ENCODE measurements at regions of chr13 and their contacts with region 1.

Region 1: DNA sequence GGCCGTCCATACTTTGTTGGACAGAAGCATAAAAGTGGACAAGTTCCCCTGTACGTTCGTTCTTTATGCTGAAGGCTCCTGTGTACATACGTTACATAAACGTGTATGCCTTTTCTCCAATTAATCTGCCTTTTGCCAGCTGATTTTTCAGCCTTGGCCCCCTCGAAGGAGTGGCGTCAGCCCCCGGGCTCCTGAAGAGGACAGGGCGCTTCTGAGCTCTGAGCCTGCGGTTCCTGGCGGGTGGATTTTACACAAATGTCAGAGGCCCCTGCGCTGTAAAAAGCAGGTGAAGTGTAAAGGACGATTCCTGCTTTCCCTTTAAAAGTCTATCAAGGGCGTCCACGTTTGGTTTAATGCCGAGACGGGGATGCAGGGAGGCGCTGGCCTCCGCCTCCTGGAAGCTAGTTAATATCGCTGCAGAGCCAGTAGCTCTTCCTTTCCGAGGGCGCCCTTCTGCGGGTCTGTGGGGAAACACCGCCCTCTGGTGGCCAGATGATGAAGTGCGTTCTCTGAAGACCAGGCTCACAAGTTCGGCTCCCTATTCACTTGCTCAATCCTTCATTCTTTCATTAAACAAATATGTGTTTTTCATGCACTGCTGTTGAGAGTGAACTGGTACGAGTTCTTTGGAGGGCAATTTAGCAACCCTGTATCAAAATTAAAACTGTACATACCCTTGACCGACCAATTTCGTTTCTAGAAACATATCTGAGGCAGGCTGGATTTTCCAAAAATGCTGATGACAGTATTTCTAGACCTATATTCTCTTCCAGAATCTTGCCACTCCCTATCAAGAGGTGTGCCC is 62.0 kb downstream of the GPR12 start:
- DNase-seq: peak; percentile 87
- H3K4me3 Mint-ChIP-seq: no peak overlapping the region
- H3K27ac Mint-ChIP-seq: no peak overlapping the region
- H3K4me1 Mint-ChIP-seq: no peaks in the 10 kb centered on the region
- H3K27me3 Mint-ChIP-seq: peaks cover 8% of the 10 kb centered on the region

Region 2: DNA sequence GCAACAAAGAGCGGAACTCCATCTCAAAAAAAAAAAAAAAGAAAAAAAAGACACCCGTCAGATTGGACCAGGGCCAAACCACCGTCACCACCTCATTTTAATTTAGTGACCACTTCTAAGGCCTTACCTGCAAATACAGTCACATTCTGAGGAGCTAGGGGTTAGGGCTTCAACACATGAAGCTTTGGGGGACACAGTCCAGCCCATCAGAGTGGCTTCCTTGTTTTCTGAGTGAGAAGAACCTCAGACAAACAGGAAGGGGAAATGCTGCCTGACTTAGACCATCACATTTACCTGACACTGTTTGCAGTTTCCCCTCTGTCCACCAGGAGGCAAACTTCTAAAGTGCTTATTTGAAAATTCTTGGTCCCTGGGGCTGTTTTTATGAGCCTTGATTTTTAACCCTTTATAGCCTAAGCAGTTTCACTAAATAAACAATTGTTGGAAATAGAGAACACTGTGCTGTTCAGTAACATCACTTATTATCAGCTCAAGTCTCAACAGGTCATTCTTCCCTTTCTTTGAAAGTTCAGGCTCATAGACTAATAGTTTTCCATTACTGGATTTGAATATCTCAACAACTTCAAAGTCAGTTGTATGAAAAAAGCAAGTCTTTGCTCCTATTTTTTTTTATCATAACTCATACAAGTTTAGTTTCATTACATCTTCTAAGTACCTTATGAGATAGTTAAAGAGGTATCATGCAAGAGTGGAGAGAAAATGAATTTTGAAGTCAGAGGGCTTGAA is 216.0 kb before region 1 on chr13:
- CTCF ChIA-PET with region 1: interaction called, 40 read pairs
- POLR2A ChIA-PET with region 1: no interaction called
- intact Hi-C with region 1: loop called (anchors 1 kb)
- DNase-seq: peak; percentile 72
- H3K4me3 Mint-ChIP-seq: no peak overlapping the region
- H3K27ac Mint-ChIP-seq: peak overlapping the region; percentile 8
- H3K4me1 Mint-ChIP-seq: peaks cover 13% of the 10 kb centered on the region
- H3K27me3 Mint-ChIP-seq: no peaks in the 10 kb centered on the region

Region 3: GRCh38 chr13:26494571-26495195 is 203.9 kb before region 1 on chr13:
- CTCF ChIA-PET with region 1: interaction called, 14 read pairs
- POLR2A ChIA-PET with region 1: no interaction called
- intact Hi-C with region 1: loop called (anchors 1 kb)
- DNase-seq: no peak
- H3K4me3 Mint-ChIP-seq: no peak overlapping the region
- H3K27ac Mint-ChIP-seq: no peak overlapping the region
- H3K4me1 Mint-ChIP-seq: no peaks in the 10 kb centered on the region
- H3K27me3 Mint-ChIP-seq: peaks cover 8% of the 10 kb centered on the region

Region 4: GRCh38 chr13:26688286-26688685 is 10.3 kb before region 1 on chr13:
- CTCF ChIA-PET with region 1: interaction called, 28 read pairs
- POLR2A ChIA-PET with region 1: no interaction called
- intact Hi-C with region 1: no loop called
- DNase-seq: no peak
- H3K4me3 Mint-ChIP-seq: no peak overlapping the region
- H3K27ac Mint-ChIP-seq: no peak overlapping the region
- H3K4me1 Mint-ChIP-seq: no peaks in the 10 kb centered on the region
- H3K27me3 Mint-ChIP-seq: peaks cover 11% of the 10 kb centered on the region

Measured in activated CD4-positive, alpha-beta memory T cell treated with anti-CD3 and anti-CD28 coated beads for 36 hours (primary cell).